ENCODE measurements at regions of chr1 and their contacts with region 1.

Region 1: GRCh38 chr1:40338745-40339424 is 21.8 kb upstream of the COL9A2 start:
- ATAC-seq: peak; percentile 46 to 90 (median 62)
- H3K4me3 ChIP-seq: no peak overlapping the region
- H3K27ac ChIP-seq: no peak overlapping the region
- H3K4me1 ChIP-seq: no peaks in the 10 kb centered on the region

Region 2: GRCh38 chr1:39866767-39867166 is 472.1 kb before region 1 on chr1:
- in situ Hi-C with region 1: no loop called
- ATAC-seq: no peak
- H3K4me3 ChIP-seq: no peak overlapping the region
- H3K27ac ChIP-seq: no peak overlapping the region
- H3K4me1 ChIP-seq: no peaks in the 10 kb centered on the region

Region 3: DNA sequence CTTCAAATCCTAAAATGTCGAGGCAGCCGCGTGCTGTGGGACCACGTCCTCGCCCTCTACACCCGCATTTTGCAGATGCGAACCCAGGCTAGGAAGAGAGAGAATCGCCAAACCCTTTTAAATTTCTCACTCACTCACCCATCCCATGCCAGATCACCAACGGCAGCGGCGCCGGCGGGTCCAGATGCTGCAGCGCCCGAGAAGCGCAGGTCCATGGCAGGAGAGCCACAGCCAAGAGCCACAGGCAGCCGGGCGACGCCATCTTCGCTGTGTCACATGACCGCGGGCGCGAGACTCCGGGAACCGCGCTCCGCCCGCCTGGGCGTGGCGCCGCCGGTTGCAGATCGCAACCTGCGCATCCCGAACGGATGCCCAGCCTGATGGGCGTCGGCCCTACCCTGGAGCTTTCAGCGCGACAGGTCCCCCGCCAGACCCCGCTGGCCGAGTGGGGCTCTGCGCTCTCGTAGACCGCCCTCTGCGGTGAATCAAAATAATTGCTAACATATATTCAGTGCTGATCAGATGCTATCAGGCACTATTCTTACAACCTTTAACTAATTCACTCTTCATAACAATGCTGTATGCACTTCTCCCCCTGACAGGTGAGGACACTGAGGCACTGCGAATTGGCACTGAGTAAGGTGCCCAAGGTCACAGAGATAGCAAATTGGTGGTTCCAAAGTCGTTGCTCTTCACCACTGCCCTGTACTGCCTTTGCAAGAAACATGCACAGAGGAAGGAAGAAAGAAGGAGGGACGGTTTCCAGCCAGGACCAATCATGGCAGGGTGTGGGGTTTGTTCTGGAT is 241.7 kb before region 1 on chr1 and contains the start of gene PPT1:
- in situ Hi-C with region 1: loop called in 1 of 9 experiments (anchors 25 kb)
- ATAC-seq: peak; percentile 96 to 98 (median 97)
- H3K4me3 ChIP-seq: peak within 1 kb of the TSS; percentile 52 to 73 (median 69)
- H3K27ac ChIP-seq: peak within 1 kb of the TSS; percentile 60 to 75
- H3K4me1 ChIP-seq: peaks cover 10 to 11% of the 10 kb centered on the region in 2 donors
- total RNA-seq, gene PPT1: 46.3 to 106 (median 65.8) TPM